ENCODE measurements at regions of chr14 and their contacts with region 1.

Region 1: GRCh38 chr14:60753264-60754119 is 18.9 kb downstream of the MNAT1 start:
- DNase-seq: peak; percentile 66
- H3K4me3 Mint-ChIP-seq: peak overlapping the region; percentile 66
- H3K27ac Mint-ChIP-seq: peak overlapping the region; percentile 90
- H3K4me1 Mint-ChIP-seq: peaks cover 53% of the 10 kb centered on the region
- H3K27me3 Mint-ChIP-seq: peaks cover 5% of the 10 kb centered on the region

Region 2: GRCh38 chr14:60455875-60456274 is 297.6 kb before region 1 on chr14:
- intact Hi-C with region 1: no loop called
- DNase-seq: no peak
- H3K4me3 Mint-ChIP-seq: no peak overlapping the region
- H3K27ac Mint-ChIP-seq: no peak overlapping the region
- H3K4me1 Mint-ChIP-seq: no peaks in the 10 kb centered on the region
- H3K27me3 Mint-ChIP-seq: no peaks in the 10 kb centered on the region

Region 3: GRCh38 chr14:60616461-60616959 is 137.0 kb before region 1 on chr14:
- intact Hi-C with region 1: no loop called
- DNase-seq: no peak
- H3K4me3 Mint-ChIP-seq: no peak overlapping the region
- H3K27ac Mint-ChIP-seq: no peak overlapping the region
- H3K4me1 Mint-ChIP-seq: no peaks in the 10 kb centered on the region
- H3K27me3 Mint-ChIP-seq: peaks cover 16% of the 10 kb centered on the region

Region 4: DNA sequence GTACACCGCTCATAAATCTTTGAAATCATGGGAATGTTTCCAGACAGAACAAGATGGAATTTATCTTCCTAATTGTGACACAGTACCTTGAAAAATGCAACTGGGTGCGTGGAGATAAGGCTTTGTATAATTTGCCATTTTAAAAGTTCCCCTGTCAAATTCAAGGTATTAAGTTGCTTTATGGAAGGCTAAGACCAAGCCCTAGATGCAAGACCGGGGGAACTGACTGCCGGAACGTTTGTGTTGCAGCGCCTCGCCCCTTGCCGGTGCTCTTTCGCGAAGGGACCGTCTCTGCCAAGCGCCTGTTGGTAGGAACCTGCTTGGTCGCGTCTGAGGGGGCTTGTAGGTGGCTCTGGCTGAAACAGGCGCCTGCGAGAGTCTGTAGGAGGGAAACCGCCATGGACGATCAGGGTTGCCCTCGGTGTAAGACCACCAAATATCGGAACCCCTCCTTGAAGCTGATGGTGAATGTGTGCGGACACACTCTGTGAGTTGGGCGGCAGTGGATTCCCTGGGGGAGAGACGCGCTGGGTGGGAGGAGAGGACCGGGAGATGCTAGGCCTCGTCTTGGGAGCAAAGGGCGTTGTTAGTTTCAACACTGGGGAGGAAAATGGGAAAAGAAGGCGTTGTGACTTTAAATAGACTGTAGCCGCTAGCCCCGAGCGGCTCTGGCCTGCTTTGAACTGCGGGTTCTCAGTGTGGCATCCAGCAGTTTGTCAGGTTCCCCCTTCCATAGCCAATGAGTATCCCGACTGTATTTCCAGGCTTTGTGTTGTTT is 18.8 kb before region 1 on chr14 and contains the start of gene MNAT1:
- intact Hi-C with region 1: loop called (anchors 1 kb)
- DNase-seq: peak; percentile 69
- H3K4me3 Mint-ChIP-seq: peak within 1 kb of the TSS; percentile 97
- H3K27ac Mint-ChIP-seq: peak within 1 kb of the TSS; percentile 87
- H3K4me1 Mint-ChIP-seq: peaks cover 27% of the 10 kb centered on the region
- H3K27me3 Mint-ChIP-seq: peaks cover 21% of the 10 kb centered on the region
- total RNA-seq, gene MNAT1: 45.1 and 51.2 TPM in 2 replicates

Region 5: DNA sequence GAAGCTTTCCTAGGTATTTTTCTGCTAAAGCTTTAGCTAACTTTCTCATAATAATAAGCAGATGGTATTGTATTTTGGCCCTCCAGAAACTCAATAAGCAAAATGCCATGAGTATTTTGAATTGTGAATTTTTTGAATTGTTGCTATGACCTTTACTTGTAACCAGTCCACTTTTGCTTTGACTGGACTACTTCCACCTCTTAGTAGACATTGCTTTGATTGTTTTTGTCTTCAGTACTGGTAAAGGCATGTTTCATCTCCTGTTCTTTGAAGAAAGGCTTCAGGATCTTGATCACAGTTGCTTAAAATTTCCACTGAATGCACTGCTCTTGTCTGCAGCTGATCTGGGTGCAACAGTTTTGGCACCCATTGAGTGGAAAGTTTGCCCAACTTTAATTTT is 125.0 kb after region 1 on chr14:
- intact Hi-C with region 1: loop called (anchors 2 kb)
- DNase-seq: no peak
- H3K4me3 Mint-ChIP-seq: no peak overlapping the region
- H3K27ac Mint-ChIP-seq: no peak overlapping the region
- H3K4me1 Mint-ChIP-seq: peaks cover 8% of the 10 kb centered on the region
- H3K27me3 Mint-ChIP-seq: peaks cover 3% of the 10 kb centered on the region

Region 6: DNA sequence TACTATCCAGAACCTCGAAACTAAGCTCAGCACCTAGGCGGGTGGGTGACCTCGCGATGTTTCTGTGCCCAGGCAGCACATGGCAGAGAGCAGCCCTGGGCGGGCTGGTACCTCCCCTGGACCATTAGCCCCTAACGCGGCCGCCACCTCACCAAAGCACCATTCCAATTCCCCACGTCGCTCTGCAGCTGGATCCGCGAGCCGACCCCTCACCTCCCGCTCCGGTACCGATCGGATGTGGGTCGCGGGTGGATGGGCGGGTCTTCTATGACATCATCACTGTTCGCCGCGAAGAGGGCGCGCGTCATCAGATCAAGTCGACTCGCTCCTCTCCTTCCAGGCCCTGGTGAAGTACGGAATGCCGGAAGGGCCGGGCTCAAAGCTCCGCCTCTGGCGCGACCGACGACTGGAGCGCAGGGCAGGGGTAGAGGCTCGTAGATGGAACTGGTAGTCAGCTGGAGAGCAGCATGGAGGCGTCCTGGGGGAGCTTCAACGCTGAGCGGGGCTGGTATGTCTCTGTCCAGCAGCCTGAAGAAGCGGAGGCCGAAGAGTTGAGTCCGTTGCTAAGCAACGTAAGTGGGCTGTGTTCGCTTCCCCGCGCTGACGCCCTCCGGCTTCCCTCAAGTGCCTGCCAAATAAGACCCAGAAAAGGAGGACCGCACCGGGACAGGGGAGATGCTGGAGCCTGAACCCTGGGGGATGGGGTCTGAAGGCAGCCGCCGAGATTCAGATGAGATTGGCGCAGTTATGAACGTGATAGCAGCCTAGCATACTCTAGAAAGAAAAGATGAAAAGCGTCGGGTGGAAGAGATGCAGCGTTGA is 227.5 kb after region 1 on chr14 and contains the starts of genes SLC38A6 and TRMT5:
- intact Hi-C with region 1: loop called (anchors 1 kb)
- DNase-seq: peak; percentile 88
- H3K4me3 Mint-ChIP-seq: no peak within 1 kb of the TSS
- H3K27ac Mint-ChIP-seq: no peak within 1 kb of the TSS
- H3K4me1 Mint-ChIP-seq: peaks cover 17% of the 10 kb centered on the region
- H3K27me3 Mint-ChIP-seq: no peaks in the 10 kb centered on the region
- total RNA-seq, gene SLC38A6: 4.5 and 4.7 TPM in 2 replicates
- total RNA-seq, gene TRMT5: 17.4 and 19.2 TPM in 2 replicates

Region 7: DNA sequence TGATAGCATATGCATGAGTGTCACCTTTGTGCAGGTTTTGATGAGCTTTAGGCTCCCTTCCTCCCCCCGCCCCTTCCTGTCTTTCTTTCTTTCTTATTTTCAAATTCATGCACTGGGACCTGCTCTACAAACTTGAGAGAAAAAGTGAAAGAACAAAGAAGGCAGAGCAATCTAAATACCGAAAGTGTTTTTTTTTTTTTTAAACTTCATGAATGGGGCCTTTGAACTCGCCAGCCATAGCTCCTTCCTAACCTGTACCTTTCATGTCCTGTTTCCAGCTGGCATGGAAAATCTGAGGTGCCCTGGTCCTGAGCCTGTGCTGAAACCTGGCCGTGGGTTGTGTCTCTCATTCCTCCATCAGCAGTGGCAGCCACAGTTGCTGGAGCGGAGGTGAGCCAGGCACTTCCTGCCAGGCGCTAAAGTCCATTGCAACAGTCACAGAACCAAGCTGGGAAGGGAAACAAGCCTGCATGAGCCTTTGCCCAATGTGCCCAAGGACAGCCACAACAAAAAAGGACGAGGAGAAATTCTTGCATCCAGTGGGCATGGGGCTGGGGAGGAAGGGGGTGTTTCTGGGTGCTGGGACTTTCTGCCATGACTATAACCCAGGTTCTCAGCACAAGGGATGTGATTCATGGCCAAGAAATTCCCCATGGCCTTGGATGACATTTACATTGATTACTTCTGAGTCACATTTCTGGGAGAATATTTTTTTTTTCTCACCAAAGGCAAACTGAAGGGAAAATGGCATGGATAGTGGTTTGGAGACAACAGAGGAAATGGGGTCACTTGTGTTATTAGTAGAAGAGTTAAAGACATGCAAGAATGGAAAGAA is 425.0 kb after region 1 on chr14:
- intact Hi-C with region 1: loop called (anchors 5 kb)
- DNase-seq: peak; percentile 27
- H3K4me3 Mint-ChIP-seq: peak overlapping the region; percentile 47
- H3K27ac Mint-ChIP-seq: peak overlapping the region; percentile 78
- H3K4me1 Mint-ChIP-seq: peaks cover 44% of the 10 kb centered on the region
- H3K27me3 Mint-ChIP-seq: peaks cover 2% of the 10 kb centered on the region

Region 8: GRCh38 chr14:61694830-61695694 is 941.6 kb after region 1 on chr14 and contains the start of gene HIF1A:
- intact Hi-C with region 1: loop called (anchors 10 kb)
- DNase-seq: peak; percentile 95
- H3K4me3 Mint-ChIP-seq: peak within 1 kb of the TSS; percentile 94
- H3K27ac Mint-ChIP-seq: peak within 1 kb of the TSS; percentile 97
- H3K4me1 Mint-ChIP-seq: peaks cover 63% of the 10 kb centered on the region
- H3K27me3 Mint-ChIP-seq: no peaks in the 10 kb centered on the region
- total RNA-seq, gene HIF1A: 241 and 247 TPM in 2 replicates